ENCODE measurements at regions of chr15 and their contacts with region 1.

Region 1: GRCh38 chr15:87967953-87968352 is 288.6 kb downstream of the NTRK3 start:
- DNase-seq: no peak
- H3K4me3 ChIP-seq: no peak overlapping the region
- CTCF ChIP-seq: no peak

Region 2: GRCh38 chr15:87816811-87817210 is 151.1 kb before region 1 on chr15:
- in situ Hi-C with region 1: no loop called
- DNase-seq: peak; percentile 52
- H3K4me3 ChIP-seq: no peak overlapping the region
- CTCF ChIP-seq: no peak

Region 3: DNA sequence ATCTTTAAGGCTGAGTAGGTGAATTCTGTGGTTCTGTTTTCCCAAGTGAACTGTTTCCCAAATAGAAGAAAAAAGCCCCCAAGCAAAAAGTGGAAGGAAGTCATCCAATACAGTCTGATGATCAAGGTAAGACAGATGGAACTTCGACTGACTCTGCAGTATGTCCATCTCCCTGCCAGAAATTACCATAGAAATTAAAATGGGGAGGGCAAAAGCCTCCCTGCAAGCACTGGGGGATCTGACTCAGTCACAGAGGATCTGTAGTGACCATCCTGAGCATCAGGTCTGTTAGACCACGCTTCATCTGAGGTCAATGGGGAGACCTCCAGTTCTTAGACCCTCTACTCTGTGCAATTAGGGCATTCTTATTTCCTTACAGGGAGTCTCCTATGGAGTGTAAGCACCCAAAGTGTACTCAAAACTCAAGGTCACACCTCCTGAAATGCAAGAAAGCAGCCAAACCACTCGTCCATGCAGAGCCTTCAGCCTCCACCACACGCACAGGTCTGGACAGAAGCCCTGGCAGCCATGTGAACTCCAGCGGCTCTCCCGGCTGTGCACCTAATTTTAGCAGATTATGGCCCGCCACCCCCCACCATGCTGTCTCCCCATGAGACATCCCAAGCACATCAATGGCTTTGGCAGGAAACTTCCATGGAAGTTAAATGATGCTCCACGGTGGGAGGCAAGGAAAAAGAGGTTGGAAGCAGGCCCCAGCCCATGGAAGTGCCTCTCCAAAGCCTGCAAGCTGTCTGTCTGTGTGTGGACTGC is 60.1 kb before region 1 on chr15:
- in situ Hi-C with region 1: loop called (anchors 5 kb)
- DNase-seq: no peak
- H3K4me3 ChIP-seq: no peak overlapping the region
- CTCF ChIP-seq: no peak

Region 4: GRCh38 chr15:88202231-88202630 is 234.3 kb after region 1 on chr15:
- in situ Hi-C with region 1: no loop called
- DNase-seq: no peak
- H3K4me3 ChIP-seq: no peak overlapping the region
- CTCF ChIP-seq: no peak

Measured in astrocyte of the cerebellum (primary cell).